Gastrocnemius medialis (tissue), 4 donors: ENCODE measurements at regions of chr3 and their contacts with region 1.

Region 1: GRCh38 chr3:51538459-51539290 is at the start of gene RAD54L2:
- DNase-seq: peak; percentile 68 to 72
- ATAC-seq: peak; percentile 94 to 95
- H3K4me3 ChIP-seq: peak within 1 kb of the TSS; percentile 82 to 96 (median 88)
- H3K27ac ChIP-seq: peak within 1 kb of the TSS; percentile 85 to 96 (median 93)
- H3K4me1 ChIP-seq: peaks cover 15 to 27% of the 10 kb centered on the region in 2 donors
- H3K27me3 ChIP-seq: no peaks in the 10 kb centered on the region
- CTCF ChIP-seq: peak in 3 of 5 experiments; percentile 9 to 51 (median 33)
- POLR2A ChIP-seq: peak; percentile 42 to 62
- total RNA-seq, gene RAD54L2: 8.8 to 11.2 (median 10.4) TPM

Region 2: DNA sequence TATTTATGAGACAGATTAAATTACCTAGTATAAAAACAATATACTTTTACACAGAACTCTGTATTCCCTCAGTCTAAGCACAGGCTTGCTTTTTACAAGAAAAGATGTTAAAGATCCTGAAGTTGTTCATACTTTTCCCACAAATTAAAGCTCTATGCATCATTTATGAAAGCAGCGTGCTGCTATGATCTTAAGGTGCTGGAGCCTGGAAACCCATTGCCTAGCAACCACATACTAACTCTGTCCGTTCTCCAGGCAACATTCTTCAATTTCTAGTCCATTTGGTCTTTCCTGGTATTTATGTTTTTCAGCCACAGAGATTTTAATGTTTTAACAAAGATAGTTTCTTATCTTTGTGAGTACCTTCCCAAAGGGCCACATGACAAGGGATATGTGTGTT is 551.9 kb before region 1 on chr3:
- in situ Hi-C with region 1: no loop called
- intact Hi-C with region 1: no loop called
- DNase-seq: no peak
- ATAC-seq: no peak
- H3K4me3 ChIP-seq: no peak overlapping the region
- H3K27ac ChIP-seq: no peak overlapping the region
- H3K4me1 ChIP-seq: peaks cover 0 to 5% of the 10 kb centered on the region in 2 donors
- H3K27me3 ChIP-seq: no peaks in the 10 kb centered on the region
- CTCF ChIP-seq: no peak
- POLR2A ChIP-seq: no peak

Region 3: GRCh38 chr3:51384726-51385473 is 153.8 kb before region 1 on chr3 and contains the start of gene MANF:
- in situ Hi-C with region 1: no loop called
- intact Hi-C with region 1: loop called (anchors 5 kb)
- DNase-seq: peak; percentile 98
- ATAC-seq: peak; percentile 96 to 97
- H3K4me3 ChIP-seq: peak within 1 kb of the TSS; percentile 73 to 96 (median 94)
- H3K27ac ChIP-seq: peak within 1 kb of the TSS; percentile 91 to 98 (median 92)
- H3K4me1 ChIP-seq: peaks cover 25 to 28% of the 10 kb centered on the region in 2 donors
- H3K27me3 ChIP-seq: no peaks in the 10 kb centered on the region
- CTCF ChIP-seq: peak in 3 of 5 experiments; percentile 14 to 24 (median 20)
- POLR2A ChIP-seq: peak; percentile 88 to 95
- total RNA-seq, gene MANF: 4.4 to 19.7 (median 11.5) TPM

Region 4: GRCh38 chr3:51622868-51623267 is 84.2 kb after region 1 on chr3:
- in situ Hi-C with region 1: no loop called
- intact Hi-C with region 1: loop called (anchors 10 kb)
- DNase-seq: peak in 1 of 2 donors; percentile 24
- ATAC-seq: no peak
- H3K4me3 ChIP-seq: no peak overlapping the region
- H3K27ac ChIP-seq: peak overlapping the region in 3 of 4 donors; percentile 2 to 77 (median 75)
- H3K4me1 ChIP-seq: peaks cover 28 to 35% of the 10 kb centered on the region in 2 donors
- H3K27me3 ChIP-seq: no peaks in the 10 kb centered on the region
- CTCF ChIP-seq: no peak
- POLR2A ChIP-seq: no peak